ENCODE measurements at regions of chr17 and their contacts with region 1.

Region 1: GRCh38 chr17:41665566-41666236 is 23.0 kb upstream of the EIF1 start:
- DNase-seq: peak; percentile 93 to 95
- ATAC-seq: peak; percentile 95
- H3K4me3 ChIP-seq: peak overlapping the region; percentile 5 to 59
- H3K27ac ChIP-seq: peak overlapping the region in 1 of 2 donors; percentile 85
- H3K4me1 ChIP-seq: no peaks in the 10 kb centered on the region
- H3K27me3 ChIP-seq: no peaks in the 10 kb centered on the region

Region 2: DNA sequence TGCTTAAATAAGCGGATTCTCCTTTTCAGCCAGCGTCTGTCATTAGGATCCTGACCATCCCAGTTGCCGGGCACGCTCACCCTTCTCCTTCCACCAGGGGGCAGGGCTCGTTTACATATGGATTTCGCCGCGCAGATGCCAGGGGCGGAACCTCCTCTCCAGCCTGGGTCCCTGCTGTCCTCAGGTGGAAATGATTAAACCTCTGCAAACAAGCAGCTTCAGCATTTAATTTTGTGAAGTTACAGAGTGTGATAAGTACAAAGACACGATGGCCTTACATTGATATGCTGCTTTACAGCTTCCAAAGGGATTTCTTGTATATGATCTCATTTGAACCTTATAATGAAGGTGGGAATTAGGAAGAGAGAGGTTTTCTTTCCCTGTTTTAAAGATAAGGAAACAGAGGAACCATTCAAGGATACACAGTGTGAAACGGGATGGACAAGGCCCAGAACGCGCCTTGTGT is 862.1 kb before region 1 on chr17:
- intact Hi-C with region 1: loop called (anchors 2 kb)
- DNase-seq: peak; percentile 75 to 90
- ATAC-seq: peak; percentile 74
- H3K4me3 ChIP-seq: no peak overlapping the region
- H3K27ac ChIP-seq: no peak overlapping the region
- H3K4me1 ChIP-seq: no peaks in the 10 kb centered on the region
- H3K27me3 ChIP-seq: no peaks in the 10 kb centered on the region

Region 3: GRCh38 chr17:41521574-41522261 is 144.0 kb before region 1 on chr17:
- intact Hi-C with region 1: no loop called
- DNase-seq: no peak
- ATAC-seq: peak; percentile 20
- H3K4me3 ChIP-seq: no peak overlapping the region
- H3K27ac ChIP-seq: no peak overlapping the region
- H3K4me1 ChIP-seq: no peaks in the 10 kb centered on the region
- H3K27me3 ChIP-seq: no peaks in the 10 kb centered on the region

Region 4: DNA sequence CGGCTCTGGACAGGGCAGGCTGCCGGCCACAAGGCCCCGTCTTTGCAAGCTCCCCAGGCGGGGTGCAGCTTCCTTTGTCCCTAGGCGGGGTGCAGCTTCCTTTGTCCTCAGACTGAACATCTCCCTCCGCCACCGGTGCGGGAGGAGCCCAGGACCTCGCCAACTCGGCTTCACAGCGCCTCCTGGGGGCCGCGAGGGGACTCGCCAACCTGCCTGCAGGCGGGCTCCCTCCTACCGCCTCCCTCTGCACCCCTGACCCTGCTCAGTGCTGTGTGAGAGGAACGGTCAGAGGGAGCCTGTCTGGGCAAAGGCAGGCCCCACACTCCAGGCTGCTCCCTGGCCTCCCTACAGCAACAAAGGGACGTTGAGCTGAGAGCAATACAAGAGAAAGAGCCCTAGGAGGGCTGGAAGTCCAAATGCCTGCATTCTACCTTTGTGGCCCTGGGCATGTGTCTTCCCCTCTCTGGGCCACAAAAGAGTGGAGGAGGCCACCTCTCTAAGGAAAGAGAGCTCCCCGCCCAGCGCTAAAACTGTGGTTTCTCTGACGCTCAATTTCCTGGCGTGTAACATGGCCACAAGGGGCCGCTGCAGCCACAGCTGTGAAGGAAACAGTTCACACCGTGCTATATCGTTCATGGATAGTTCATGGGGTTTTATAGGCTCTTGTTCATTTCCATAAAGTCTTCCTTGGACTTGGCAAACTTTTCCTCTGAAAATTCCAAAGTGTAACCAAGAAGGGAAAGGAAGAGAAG is 116.7 kb before region 1 on chr17:
- intact Hi-C with region 1: loop called (anchors 1 to 5 kb)
- DNase-seq: peak; percentile 91 to 94
- ATAC-seq: peak; percentile 88
- H3K4me3 ChIP-seq: no peak overlapping the region
- H3K27ac ChIP-seq: no peak overlapping the region
- H3K4me1 ChIP-seq: no peaks in the 10 kb centered on the region
- H3K27me3 ChIP-seq: no peaks in the 10 kb centered on the region

Region 5: GRCh38 chr17:41588126-41588810 is 77.4 kb before region 1 on chr17:
- intact Hi-C with region 1: no loop called
- DNase-seq: peak in 1 of 2 donors; percentile 66
- ATAC-seq: peak; percentile 61
- H3K4me3 ChIP-seq: no peak overlapping the region
- H3K27ac ChIP-seq: no peak overlapping the region
- H3K4me1 ChIP-seq: peaks cover 0 to 5% of the 10 kb centered on the region in 2 donors
- H3K27me3 ChIP-seq: no peaks in the 10 kb centered on the region

Region 6: DNA sequence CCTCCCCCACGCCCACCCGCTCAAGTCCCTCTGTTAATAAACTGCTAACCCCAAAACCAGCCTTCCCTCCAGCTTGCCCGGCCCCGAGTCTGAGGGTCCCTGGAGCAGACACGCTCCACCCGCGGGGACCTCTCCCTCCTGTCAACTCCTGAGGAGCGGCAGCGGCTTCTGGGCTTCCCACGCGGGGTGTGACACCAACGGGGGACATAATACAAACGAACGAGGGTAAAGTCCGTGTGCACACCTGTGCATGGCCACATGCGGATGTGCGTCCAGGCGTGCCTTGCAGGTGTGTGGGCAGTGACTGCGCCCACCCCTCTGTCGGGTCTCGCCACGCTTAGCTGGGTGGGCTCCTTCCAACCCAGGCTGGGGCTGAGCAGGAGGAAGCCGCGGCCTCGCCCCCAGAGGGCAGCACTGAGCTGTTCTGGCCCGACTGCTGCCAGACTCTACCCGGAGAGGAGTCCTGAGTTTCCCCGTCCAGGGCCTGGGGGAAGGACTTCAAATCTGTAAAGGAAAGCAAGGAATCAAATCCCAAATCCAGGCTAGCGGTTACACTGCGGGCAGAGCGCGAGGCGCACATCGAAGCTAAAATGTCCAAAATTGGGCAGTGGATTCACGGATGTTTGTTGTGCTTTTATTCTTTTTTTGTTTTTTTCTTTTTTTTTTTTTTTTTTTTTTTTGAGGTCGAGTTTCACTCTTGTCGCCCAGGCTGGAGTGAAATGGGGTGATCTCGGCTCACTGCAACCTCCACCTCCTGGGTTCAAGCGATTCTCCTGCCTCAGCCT is 17.1 kb before region 1 on chr17:
- intact Hi-C with region 1: loop called in 1 of 2 experiments (anchors 1 kb)
- DNase-seq: peak; percentile 92 to 97
- ATAC-seq: peak; percentile 95
- H3K4me3 ChIP-seq: no peak overlapping the region
- H3K27ac ChIP-seq: no peak overlapping the region
- H3K4me1 ChIP-seq: peaks cover 0 to 3% of the 10 kb centered on the region in 2 donors
- H3K27me3 ChIP-seq: no peaks in the 10 kb centered on the region

Measured in aorta (tissue), 5 donors.